Naive thymus-derived CD8-positive, alpha-beta T cell (primary cell): ENCODE measurements at regions of chrX and their contacts with region 1.

Region 1: GRCh38 chrX:154526901-154527675 is 11.1 kb upstream of the FAM3A start:
- DNase-seq: peak in 8 of 10 donors; percentile 29 to 72 (median 40)
- ATAC-seq: peak; percentile 80 to 85
- H3K4me3 Mint-ChIP-seq: peak overlapping the region in 6 of 10 donors; percentile 10 to 56 (median 34)
- H3K27ac Mint-ChIP-seq: peak overlapping the region in 8 of 10 donors; percentile 52 to 80 (median 72)
- H3K4me1 Mint-ChIP-seq: peaks cover 3 to 26% (median 20%) of the 10 kb centered on the region in 4 donors
- H3K27me3 Mint-ChIP-seq: no peaks in the 10 kb centered on the region

Region 2: DNA sequence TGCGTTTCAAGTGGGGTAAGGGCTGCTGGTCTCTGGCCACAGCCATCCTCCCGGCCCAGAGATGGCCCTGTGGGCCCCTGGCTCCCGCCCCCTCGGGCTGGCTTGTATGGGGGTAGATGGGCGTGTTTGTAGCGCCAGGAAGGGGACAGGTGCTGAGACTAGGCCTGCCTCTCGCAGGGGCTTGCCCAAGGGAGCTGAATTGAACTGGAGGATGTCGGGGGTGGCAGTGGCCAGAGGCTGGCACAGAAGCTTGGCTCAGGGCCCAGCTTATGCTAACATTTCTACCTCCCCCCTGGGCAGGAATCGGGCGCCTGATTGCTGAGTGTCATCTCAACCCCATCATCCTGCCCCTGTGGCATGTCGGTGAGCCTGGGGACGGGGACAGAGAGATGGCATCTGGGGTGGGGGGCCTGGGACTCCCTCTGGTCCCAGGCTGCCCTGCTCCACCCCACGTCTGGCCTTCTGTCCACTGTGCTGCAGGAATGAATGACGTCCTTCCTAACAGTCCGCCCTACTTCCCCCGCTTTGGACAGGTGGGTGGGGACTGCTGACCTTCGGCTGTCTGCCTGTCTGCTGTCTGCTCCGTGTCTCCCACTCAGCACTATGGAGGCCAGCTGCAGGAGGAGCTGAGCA is 107.2 kb before region 1 on chrX:
- POLR2A ChIA-PET with region 1: no interaction called
- DNase-seq: no peak
- ATAC-seq: no peak
- H3K4me3 Mint-ChIP-seq: no peak overlapping the region
- H3K27ac Mint-ChIP-seq: peak overlapping the region in 1 of 10 donors; percentile 58
- H3K4me1 Mint-ChIP-seq: peaks cover 0 to 4% (median 2%) of the 10 kb centered on the region in 4 donors
- H3K27me3 Mint-ChIP-seq: no peaks in the 10 kb centered on the region

Region 3: GRCh38 chrX:154490414-154491083 is 36.5 kb before region 1 on chrX and contains the start of gene SLC10A3:
- POLR2A ChIA-PET with region 1: interaction called, 35 read pairs
- DNase-seq: peak; percentile 72 to 93 (median 81)
- ATAC-seq: peak; percentile 80 to 83
- H3K4me3 Mint-ChIP-seq: peak within 1 kb of the TSS; percentile 83 to 93 (median 87)
- H3K27ac Mint-ChIP-seq: peak within 1 kb of the TSS; percentile 73 to 96 (median 94)
- H3K4me1 Mint-ChIP-seq: peaks cover 4 to 30% (median 20%) of the 10 kb centered on the region in 4 donors
- H3K27me3 Mint-ChIP-seq: no peaks in the 10 kb centered on the region
- polyA plus RNA-seq, gene SLC10A3: 30.5 to 42.3 (median 35.9) TPM

Region 4: GRCh38 chrX:154502989-154503388 is 24.1 kb before region 1 on chrX:
- POLR2A ChIA-PET with region 1: no interaction called
- DNase-seq: no peak
- ATAC-seq: no peak
- H3K4me3 Mint-ChIP-seq: no peak overlapping the region
- H3K27ac Mint-ChIP-seq: no peak overlapping the region
- H3K4me1 Mint-ChIP-seq: no peaks in the 10 kb centered on the region
- H3K27me3 Mint-ChIP-seq: no peaks in the 10 kb centered on the region